ENCODE measurements at regions of chr4 and their contacts with region 1.

Region 1: GRCh38 chr4:73019462-73020047 is 50.0 kb downstream of the COX18 start:
- DNase-seq: peak; percentile 6 to 18
- ATAC-seq: 0 out of 6 replicates have a peak, but pooled peaks of 1 of the 2 experiments have one; percentile 28
- H3K4me3 ChIP-seq: no peak overlapping the region
- H3K27ac ChIP-seq: no peak overlapping the region
- H3K4me1 ChIP-seq: no peaks in the 10 kb centered on the region
- CTCF ChIP-seq: peak; percentile 73
- EP300 ChIP-seq: no peak
- POLR2A ChIP-seq: no peak
- RAD21 ChIP-seq: peak; percentile 71 to 81

Region 2: DNA sequence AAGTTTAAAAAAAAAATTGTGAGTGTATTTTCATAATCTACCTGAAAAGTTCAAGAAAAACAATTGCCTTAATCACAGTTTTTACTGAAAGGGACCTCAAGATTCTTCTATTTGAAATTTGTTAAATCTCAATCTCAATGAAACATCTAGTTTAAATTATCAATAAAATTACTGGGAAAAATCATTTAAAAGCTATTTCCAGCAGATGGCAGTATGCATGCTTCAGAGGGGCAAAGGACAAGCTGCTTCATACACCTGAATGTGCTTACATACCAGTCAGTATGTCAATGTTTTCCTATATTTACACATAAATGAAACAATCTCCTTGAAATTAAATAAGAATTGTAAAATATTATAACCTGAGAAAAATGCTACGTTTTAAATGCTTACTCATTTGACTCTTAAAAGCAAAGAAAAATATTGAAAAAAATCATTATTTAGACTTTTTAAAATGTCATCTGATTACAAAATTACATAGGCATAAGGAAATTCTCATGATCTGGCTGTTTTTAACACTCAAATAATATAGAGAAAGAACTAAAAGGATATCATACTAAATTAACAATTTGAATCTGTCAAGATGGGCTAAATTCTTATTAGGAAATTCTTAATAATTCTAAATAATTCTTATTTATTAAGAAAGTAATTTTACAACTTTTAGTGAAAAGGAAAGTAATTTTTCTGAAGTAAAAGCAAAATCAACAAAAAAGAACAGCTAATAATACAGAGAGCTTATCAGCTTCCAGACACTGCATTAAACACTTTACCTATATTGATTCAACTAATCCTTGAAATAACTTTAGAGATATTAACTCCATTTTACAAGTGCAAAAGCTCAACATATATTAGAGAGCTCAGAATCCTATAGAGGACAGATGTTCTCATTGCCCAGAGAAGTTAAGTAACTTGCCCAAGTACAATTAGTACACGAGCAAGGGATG is 692.6 kb before region 1 on chr4:
- CTCF ChIA-PET with region 1: interaction called, 37 read pairs
- POLR2A ChIA-PET with region 1: no interaction called
- DNase-seq: peak; percentile 2 to 32
- ATAC-seq: no peak
- H3K4me3 ChIP-seq: no peak overlapping the region
- H3K27ac ChIP-seq: no peak overlapping the region
- H3K4me1 ChIP-seq: no peaks in the 10 kb centered on the region
- CTCF ChIP-seq: peak; percentile 56
- EP300 ChIP-seq: no peak
- POLR2A ChIP-seq: no peak
- RAD21 ChIP-seq: peak; percentile 48 to 50

Region 3: DNA sequence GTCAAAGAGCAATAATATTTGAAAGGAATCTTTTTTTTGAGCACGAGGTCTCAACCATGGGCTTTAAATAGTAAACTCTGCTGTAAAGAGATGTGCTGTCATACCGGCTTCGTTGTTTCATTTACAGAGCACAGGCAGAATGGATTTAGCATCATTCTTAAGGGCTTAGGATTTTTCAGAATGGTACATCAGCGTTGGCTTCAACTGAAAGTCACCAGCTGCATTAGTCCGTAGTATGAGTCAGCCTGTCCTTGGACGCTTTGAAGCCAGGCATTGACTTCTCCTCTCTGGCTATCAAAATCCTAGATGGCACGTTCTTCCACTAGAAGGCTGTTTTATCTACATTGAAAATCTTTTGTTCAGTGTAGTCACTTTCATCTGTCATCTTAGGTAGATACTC is 26.3 kb after region 1 on chr4:
- CTCF ChIA-PET with region 1: no interaction called
- POLR2A ChIA-PET with region 1: no interaction called
- DNase-seq: no peak
- ATAC-seq: no peak
- H3K4me3 ChIP-seq: no peak overlapping the region
- H3K27ac ChIP-seq: no peak overlapping the region
- H3K4me1 ChIP-seq: no peaks in the 10 kb centered on the region
- CTCF ChIP-seq: no peak
- EP300 ChIP-seq: no peak
- POLR2A ChIP-seq: no peak
- RAD21 ChIP-seq: no peak